ENCODE measurements at regions of chr7 and their contacts with region 1.

Region 1: DNA sequence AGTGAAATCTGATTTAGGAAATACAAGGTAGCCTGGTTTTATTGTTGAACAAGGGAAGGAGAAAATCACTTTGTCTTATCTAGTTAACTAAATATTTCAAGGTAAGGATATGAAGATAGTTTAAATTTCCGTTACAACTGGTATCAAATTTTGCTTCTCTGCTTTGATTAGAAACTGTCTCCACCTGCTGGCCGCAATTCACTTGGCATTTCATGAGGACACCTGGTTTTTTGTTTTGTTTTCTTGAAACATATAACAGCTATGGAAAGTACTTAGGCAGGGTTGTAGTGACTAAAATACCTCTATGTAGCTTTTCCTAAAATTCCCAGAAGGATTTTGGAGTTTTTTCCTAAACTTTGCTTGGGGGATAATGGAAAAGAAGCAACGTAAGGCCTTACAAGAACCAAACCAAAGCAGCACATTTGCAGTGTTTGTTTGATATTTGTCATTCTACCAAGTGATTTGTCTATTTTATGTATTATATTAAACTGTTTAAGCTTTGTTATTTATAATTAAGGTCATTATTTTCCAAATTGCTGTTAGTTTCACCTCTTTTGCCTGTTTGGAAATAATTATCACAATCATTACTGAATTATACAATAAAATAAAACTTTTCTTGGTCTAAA is 73.6 kb downstream of the AHCYL2 start:
- DNase-seq: peak in 8 of 9 experiments; percentile 19 to 63 (median 54)
- ATAC-seq: no peak
- H3K4me3 ChIP-seq: no peak overlapping the region
- H3K4me3 Mint-ChIP-seq: no peak overlapping the region
- H3K27ac ChIP-seq: no peak overlapping the region
- H3K27ac Mint-ChIP-seq: no peak overlapping the region
- H3K4me1 ChIP-seq: no peaks in the 10 kb centered on the region
- H3K4me1 Mint-ChIP-seq: no peaks in the 10 kb centered on the region
- H3K27me3 ChIP-seq: no peaks in the 10 kb centered on the region
- H3K27me3 Mint-ChIP-seq: no peaks in the 10 kb centered on the region
- CTCF ChIP-seq: peak; percentile 70

Region 2: GRCh38 chr7:129285111-129285510 is 13.3 kb before region 1 on chr7:
- CTCF ChIA-PET with region 1: interaction called, 14 read pairs
- POLR2A ChIA-PET with region 1: no interaction called
- intact Hi-C with region 1: no loop called
- DNase-seq: no peak
- ATAC-seq: no peak
- H3K4me3 ChIP-seq: no peak overlapping the region
- H3K4me3 Mint-ChIP-seq: no peak overlapping the region
- H3K27ac ChIP-seq: no peak overlapping the region
- H3K27ac Mint-ChIP-seq: no peak overlapping the region
- H3K4me1 ChIP-seq: no peaks in the 10 kb centered on the region
- H3K4me1 Mint-ChIP-seq: peaks cover 2% of the 10 kb centered on the region
- H3K27me3 ChIP-seq: no peaks in the 10 kb centered on the region
- H3K27me3 Mint-ChIP-seq: no peaks in the 10 kb centered on the region
- CTCF ChIP-seq: no peak

Region 3: GRCh38 chr7:129502376-129502776 is 204.0 kb after region 1 on chr7 and contains the start of gene SMKR1:
- CTCF ChIA-PET with region 1: no interaction called
- POLR2A ChIA-PET with region 1: no interaction called
- intact Hi-C with region 1: no loop called
- DNase-seq: peak; percentile 85 to 98 (median 93)
- ATAC-seq: peak; percentile 95
- H3K4me3 ChIP-seq: peak within 1 kb of the TSS; percentile 63 to 71
- H3K4me3 Mint-ChIP-seq: peak within 1 kb of the TSS; percentile 79
- H3K27ac ChIP-seq: peak within 1 kb of the TSS; percentile 64 to 75
- H3K27ac Mint-ChIP-seq: peak within 1 kb of the TSS; percentile 86
- H3K4me1 ChIP-seq: peaks cover 13% of the 10 kb centered on the region
- H3K4me1 Mint-ChIP-seq: peaks cover 17% of the 10 kb centered on the region
- H3K27me3 ChIP-seq: no peaks in the 10 kb centered on the region
- H3K27me3 Mint-ChIP-seq: no peaks in the 10 kb centered on the region
- CTCF ChIP-seq: no peak
- total RNA-seq, gene SMKR1: 0.56 to 0.68 TPM